GM12878 (cell line): ENCODE measurements at regions of chr11 and their contacts with region 1.

Region 1: DNA sequence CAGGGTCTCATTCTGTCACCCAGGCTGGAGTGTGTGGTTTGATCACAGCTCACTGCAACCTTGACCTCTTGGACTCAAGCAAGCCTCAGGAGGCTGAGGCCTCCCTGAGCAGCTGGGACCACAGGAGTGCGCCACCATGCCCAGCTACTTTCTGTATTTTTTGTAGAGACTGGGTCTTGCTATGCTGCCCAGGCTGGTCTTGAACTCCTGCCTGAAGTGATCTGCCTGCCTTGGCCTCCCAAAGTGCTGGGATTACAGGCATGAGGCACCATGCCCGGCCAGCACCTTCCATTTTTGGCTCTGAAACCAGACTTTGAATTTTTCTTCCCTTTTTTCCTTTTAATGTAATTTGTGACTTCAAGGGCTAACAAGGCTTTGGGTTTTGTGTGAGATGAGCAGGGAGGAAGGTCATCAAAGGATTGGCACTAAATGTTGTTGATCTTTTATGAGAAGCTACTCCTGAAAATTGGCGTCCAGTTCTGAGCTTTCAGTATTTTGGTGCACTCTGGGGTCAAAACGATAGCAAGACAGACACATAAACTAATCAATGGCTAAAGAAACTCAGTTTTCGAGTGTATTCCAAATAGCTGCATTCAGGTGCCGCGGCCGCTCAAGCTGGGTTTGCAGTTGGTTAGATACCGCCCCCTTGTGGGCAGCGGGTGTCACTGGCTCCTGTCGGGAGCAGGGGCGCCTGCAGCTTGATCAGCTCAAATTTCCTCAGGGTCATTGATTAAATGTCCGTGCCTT is 51.9 kb upstream of the CLMP start:
- DNase-seq: no peak
- ATAC-seq: peak; percentile 96
- H3K4me3 ChIP-seq: no peak overlapping the region
- H3K27ac ChIP-seq: no peak overlapping the region
- H3K4me1 ChIP-seq: no peaks in the 10 kb centered on the region; the same call in 1 of the 2 replicates
- H3K27me3 ChIP-seq: peaks cover 0 to 2% of the 10 kb centered on the region in 2 experiments; a peak in 1 of 4 replicates
- CTCF ChIP-seq: peak; percentile 96 to 98 (median 98)
- EP300 ChIP-seq: no peak
- POLR2A ChIP-seq: no peak
- RAD21 ChIP-seq: peak; percentile 93

Region 2: GRCh38 chr11:122020902-122021301 is 1226.0 kb before region 1 on chr11:
- CTCF ChIA-PET with region 1: no interaction called
- POLR2A ChIA-PET with region 1: no interaction called
- RAD21 ChIA-PET with region 1: no interaction called
- SMC1A ChIA-PET with region 1: no interaction called
- in situ Hi-C with region 1: no loop called
- intact Hi-C with region 1: no loop called
- DNase-seq: no peak
- ATAC-seq: no peak
- H3K4me3 ChIP-seq: no peak overlapping the region
- H3K27ac ChIP-seq: no peak overlapping the region
- H3K4me1 ChIP-seq: no peaks in the 10 kb centered on the region
- H3K27me3 ChIP-seq: no peaks in the 10 kb centered on the region
- CTCF ChIP-seq: no peak; a peak in 1 of 6 replicates
- EP300 ChIP-seq: no peak
- POLR2A ChIP-seq: no peak
- RAD21 ChIP-seq: no peak

Region 3: DNA sequence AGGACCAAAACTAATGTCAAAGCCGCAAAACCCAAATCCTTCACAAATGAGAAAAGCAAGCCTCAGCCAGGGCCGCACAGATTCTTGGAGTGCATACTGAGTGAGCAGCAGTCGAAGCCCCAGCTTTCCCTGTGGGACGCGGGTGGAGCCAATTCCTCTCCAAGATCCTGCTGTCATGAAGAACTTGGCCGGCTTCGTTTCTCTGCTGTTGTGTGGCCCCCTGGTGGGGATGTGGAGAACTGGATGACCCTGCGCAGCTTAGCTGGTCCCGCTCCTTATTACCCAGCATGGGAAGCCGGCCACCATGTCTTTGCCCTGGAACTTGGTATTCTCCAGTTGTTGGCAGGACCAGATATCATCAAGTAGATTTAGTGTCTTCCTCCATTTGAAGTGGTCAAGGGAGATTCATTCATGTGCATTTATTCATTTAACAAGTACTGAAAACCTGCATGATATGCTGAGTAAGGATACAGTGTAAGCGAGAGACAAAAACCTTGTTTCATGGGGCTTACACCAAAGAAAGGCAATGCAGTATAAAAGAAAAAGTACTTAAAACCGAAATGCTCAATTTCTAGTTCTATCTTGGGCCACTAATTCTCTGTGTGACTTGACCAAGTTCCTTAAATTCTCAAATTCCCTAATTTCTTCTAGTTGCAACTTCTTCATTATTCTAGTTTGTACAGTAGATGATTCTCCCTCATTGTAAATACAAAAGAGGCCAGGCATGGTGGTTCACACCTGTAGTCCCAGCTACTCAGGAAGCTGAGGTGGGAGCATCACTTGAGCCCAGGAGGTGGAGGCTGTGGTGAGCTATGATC is 465.3 kb before region 1 on chr11:
- CTCF ChIA-PET with region 1: no interaction called
- POLR2A ChIA-PET with region 1: interaction called, 10 read pairs
- RAD21 ChIA-PET with region 1: no interaction called
- SMC1A ChIA-PET with region 1: no interaction called
- in situ Hi-C with region 1: no loop called
- intact Hi-C with region 1: no loop called
- DNase-seq: no peak
- ATAC-seq: peak; percentile 96
- H3K4me3 ChIP-seq: no peak overlapping the region
- H3K27ac ChIP-seq: no peak overlapping the region
- H3K4me1 ChIP-seq: no peaks in the 10 kb centered on the region
- H3K27me3 ChIP-seq: no peaks in the 10 kb centered on the region; a peak in 1 of 4 replicates
- CTCF ChIP-seq: peak; percentile 84 to 91 (median 85)
- EP300 ChIP-seq: no peak
- POLR2A ChIP-seq: no peak
- RAD21 ChIP-seq: peak; percentile 87

Region 4: GRCh38 chr11:123054301-123055065 is 192.4 kb before region 1 on chr11:
- CTCF ChIA-PET with region 1: interaction called, 11 read pairs
- POLR2A ChIA-PET with region 1: interaction called, 3 read pairs
- RAD21 ChIA-PET with region 1: interaction called, 21 read pairs
- SMC1A ChIA-PET with region 1: interaction called, 13 read pairs
- in situ Hi-C with region 1: no loop called
- intact Hi-C with region 1: no loop called
- DNase-seq: no peak
- ATAC-seq: peak; percentile 87
- H3K4me3 ChIP-seq: no peak overlapping the region
- H3K27ac ChIP-seq: no peak overlapping the region
- H3K4me1 ChIP-seq: no peaks in the 10 kb centered on the region; the same call in 1 of the 2 replicates
- H3K27me3 ChIP-seq: no peaks in the 10 kb centered on the region
- CTCF ChIP-seq: peak; percentile 61 to 74 (median 63)
- EP300 ChIP-seq: no peak
- POLR2A ChIP-seq: no peak
- RAD21 ChIP-seq: peak; percentile 58

Region 5: GRCh38 chr11:123110356-123110755 is 136.6 kb before region 1 on chr11:
- CTCF ChIA-PET with region 1: interaction called, 117 read pairs
- POLR2A ChIA-PET with region 1: no interaction called
- RAD21 ChIA-PET with region 1: interaction called, 44 read pairs
- SMC1A ChIA-PET with region 1: interaction called, 47 read pairs
- in situ Hi-C with region 1: loop called (anchors 5 kb)
- intact Hi-C with region 1: loop called (anchors 1 kb)
- DNase-seq: no peak
- ATAC-seq: no peak
- H3K4me3 ChIP-seq: no peak overlapping the region
- H3K27ac ChIP-seq: no peak overlapping the region
- H3K4me1 ChIP-seq: no peaks in the 10 kb centered on the region
- H3K27me3 ChIP-seq: peaks cover 0 to 3% of the 10 kb centered on the region in 2 experiments; a peak in 2 of 4 replicates
- CTCF ChIP-seq: no peak
- EP300 ChIP-seq: no peak
- POLR2A ChIP-seq: no peak
- RAD21 ChIP-seq: no peak

Region 6: GRCh38 chr11:123174196-123175183 is 72.4 kb before region 1 on chr11:
- CTCF ChIA-PET with region 1: interaction called, 11 read pairs
- POLR2A ChIA-PET with region 1: no interaction called
- RAD21 ChIA-PET with region 1: interaction called, 3 read pairs
- SMC1A ChIA-PET with region 1: no interaction called
- in situ Hi-C with region 1: no loop called
- intact Hi-C with region 1: loop called (anchors 5 kb)
- DNase-seq: no peak
- ATAC-seq: no peak
- H3K4me3 ChIP-seq: no peak overlapping the region
- H3K27ac ChIP-seq: no peak overlapping the region
- H3K4me1 ChIP-seq: no peaks in the 10 kb centered on the region
- H3K27me3 ChIP-seq: no peaks in the 10 kb centered on the region
- CTCF ChIP-seq: no peak
- EP300 ChIP-seq: no peak
- POLR2A ChIP-seq: no peak
- RAD21 ChIP-seq: no peak

Region 7: DNA sequence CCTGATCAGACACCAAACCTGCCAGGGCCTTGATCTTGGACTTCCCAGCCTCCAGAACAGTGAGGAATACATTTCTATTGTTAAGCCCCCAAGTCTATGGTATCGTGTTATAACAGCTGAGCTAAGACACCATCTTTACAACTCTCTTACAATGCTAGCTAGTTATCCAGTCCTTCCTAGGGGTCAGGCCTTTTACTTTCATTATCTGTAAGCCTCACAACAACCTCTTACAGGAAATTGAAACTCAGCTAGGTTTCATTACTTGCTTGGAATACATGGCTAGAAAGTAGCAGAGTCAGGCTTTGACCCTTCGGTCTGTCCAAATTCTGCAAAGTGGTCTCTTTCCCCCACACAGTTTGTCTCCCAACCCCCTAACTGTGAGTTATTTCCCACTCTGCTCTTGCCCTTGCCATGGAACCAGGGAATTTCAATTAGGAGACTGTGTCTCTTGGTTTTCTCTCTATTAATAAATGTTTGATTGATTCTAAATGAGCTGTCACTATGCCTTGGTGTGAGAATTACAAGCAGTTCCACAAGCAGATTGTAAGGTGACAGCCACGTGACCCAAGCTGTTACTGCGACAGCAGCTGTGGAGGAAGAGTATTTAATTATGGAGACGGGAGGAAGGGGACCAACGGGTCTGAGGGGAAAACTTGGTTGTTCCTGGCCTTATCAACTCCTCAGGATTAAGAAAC is 13.5 kb before region 1 on chr11:
- CTCF ChIA-PET with region 1: interaction called, 21 read pairs
- POLR2A ChIA-PET with region 1: no interaction called
- RAD21 ChIA-PET with region 1: no interaction called
- SMC1A ChIA-PET with region 1: interaction called, 7 read pairs
- in situ Hi-C with region 1: no loop called
- intact Hi-C with region 1: no loop called
- DNase-seq: peak; percentile 34
- ATAC-seq: peak; percentile 95
- H3K4me3 ChIP-seq: no peak overlapping the region; the same call in 1 of the 2 replicates
- H3K27ac ChIP-seq: peak overlapping the region; percentile 41
- H3K4me1 ChIP-seq: peaks cover 8% of the 10 kb centered on the region
- H3K27me3 ChIP-seq: peaks cover 0 to 2% of the 10 kb centered on the region in 2 experiments; a peak in 1 of 4 replicates
- CTCF ChIP-seq: no peak
- EP300 ChIP-seq: no peak
- POLR2A ChIP-seq: no peak
- RAD21 ChIP-seq: no peak

Region 8: DNA sequence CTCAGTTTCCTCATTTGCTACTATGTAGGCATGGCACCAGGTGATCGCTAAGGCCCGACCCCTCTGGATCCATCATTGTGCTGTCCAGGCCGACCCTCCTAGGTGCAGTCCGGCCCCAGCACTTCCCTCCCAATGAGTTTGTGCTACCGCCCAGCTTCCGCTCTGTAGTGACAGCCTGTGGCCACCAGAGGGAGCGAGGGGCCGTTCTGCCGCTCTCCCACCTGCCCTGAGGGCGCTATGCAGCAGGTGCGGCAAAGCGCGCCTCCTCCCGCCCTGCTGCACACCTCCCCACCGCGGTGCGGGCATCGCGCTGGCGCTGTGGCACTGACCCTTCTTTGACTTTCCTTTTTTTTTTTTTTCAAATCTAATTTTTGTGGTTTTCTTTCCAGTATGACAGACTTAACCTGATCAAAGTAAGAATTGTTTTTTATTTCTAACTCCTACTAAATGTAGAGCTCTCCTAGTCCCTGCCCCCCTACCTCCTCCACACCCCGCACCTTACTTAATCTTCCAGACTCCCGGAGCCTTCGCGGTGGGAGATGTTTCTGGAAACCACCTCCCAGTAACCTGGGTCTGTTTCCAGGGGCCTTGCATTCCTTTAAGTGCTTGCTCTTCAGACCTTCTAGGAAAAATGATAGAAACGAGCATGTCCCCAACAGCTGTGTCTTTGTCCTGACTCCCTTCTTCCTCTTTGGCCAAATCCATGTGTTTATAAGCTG is 333.8 kb after region 1 on chr11:
- CTCF ChIA-PET with region 1: interaction called, 10 read pairs
- POLR2A ChIA-PET with region 1: no interaction called
- RAD21 ChIA-PET with region 1: interaction called, 3 read pairs
- SMC1A ChIA-PET with region 1: no interaction called
- in situ Hi-C with region 1: no loop called
- intact Hi-C with region 1: no loop called
- DNase-seq: no peak
- ATAC-seq: peak; percentile 93
- H3K4me3 ChIP-seq: no peak overlapping the region
- H3K27ac ChIP-seq: no peak overlapping the region
- H3K4me1 ChIP-seq: peaks cover 9% of the 10 kb centered on the region
- H3K27me3 ChIP-seq: no peaks in the 10 kb centered on the region
- CTCF ChIP-seq: peak; percentile 94 to 100 (median 96)
- EP300 ChIP-seq: no peak
- POLR2A ChIP-seq: no peak
- RAD21 ChIP-seq: peak; percentile 71